MCF 10A (cell line): ENCODE measurements at regions of chr6 and their contacts with region 1.

Region 1: DNA sequence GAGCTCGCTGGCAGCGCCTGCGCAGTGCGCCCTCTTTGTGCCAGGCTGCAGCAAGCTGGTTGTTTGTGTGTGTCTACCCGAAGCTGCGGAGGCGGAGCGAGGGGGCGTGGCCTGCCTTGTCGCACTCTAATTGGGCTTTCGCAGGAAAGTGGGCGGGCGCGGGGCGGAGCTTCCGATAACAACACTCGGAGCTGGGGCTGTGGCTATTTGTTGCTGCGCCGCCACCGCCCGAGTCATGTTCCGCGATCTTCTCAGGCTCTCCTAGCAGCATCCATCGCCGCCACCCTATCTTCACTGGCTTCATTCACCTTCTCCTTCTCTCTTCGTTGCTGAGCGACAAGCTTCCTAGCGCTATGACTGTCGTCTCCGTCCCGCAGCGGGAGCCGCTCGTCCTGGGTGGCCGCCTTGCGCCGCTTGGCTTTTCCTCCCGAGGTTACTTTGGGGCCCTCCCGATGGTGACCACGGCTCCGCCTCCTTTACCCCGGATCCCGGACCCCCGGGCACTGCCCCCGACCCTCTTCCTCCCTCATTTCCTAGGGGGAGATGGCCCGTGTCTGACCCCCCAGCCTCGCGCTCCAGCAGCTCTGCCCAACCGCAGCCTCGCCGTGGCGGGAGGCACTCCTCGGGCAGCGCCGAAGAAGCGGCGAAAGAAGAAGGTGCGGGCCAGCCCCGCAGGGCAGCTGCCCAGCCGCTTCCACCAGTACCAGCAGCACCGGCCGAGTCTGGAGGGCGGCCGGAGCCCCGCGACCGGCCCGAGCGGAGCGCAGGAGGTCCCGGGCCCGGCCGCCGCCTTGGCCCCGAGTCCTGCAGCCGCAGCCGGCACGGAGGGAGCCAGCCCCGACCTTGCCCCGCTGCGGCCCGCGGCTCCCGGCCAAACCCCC is at the start of gene PNRC1:
- DNase-seq: peak; percentile 99
- H3K4me3 Mint-ChIP-seq: peak within 1 kb of the TSS; percentile 96
- H3K27ac Mint-ChIP-seq: peak within 1 kb of the TSS; percentile 92
- H3K4me1 Mint-ChIP-seq: peaks cover 19% of the 10 kb centered on the region
- H3K27me3 Mint-ChIP-seq: no peaks in the 10 kb centered on the region
- CTCF ChIP-seq: no peak
- total RNA-seq, gene PNRC1: 158 and 183 TPM in 2 replicates

Region 2: GRCh38 chr6:88963139-88964090 is 117.4 kb before region 1 on chr6 and contains the start of gene RNGTT:
- CTCF ChIA-PET with region 1: no interaction called
- POLR2A ChIA-PET with region 1: interaction called, 19 read pairs
- intact Hi-C with region 1: no loop called
- DNase-seq: peak; percentile 99
- H3K4me3 Mint-ChIP-seq: peak within 1 kb of the TSS; percentile 93
- H3K27ac Mint-ChIP-seq: peak within 1 kb of the TSS; percentile 92
- H3K4me1 Mint-ChIP-seq: peaks cover 14% of the 10 kb centered on the region
- H3K27me3 Mint-ChIP-seq: no peaks in the 10 kb centered on the region
- CTCF ChIP-seq: no peak
- total RNA-seq, gene RNGTT: 14.6 and 20.6 TPM in 2 replicates

Region 3: GRCh38 chr6:89013438-89013837 is 67.3 kb before region 1 on chr6:
- CTCF ChIA-PET with region 1: no interaction called
- POLR2A ChIA-PET with region 1: interaction called, 11 read pairs
- intact Hi-C with region 1: no loop called
- DNase-seq: no peak
- H3K4me3 Mint-ChIP-seq: no peak overlapping the region
- H3K27ac Mint-ChIP-seq: no peak overlapping the region
- H3K4me1 Mint-ChIP-seq: no peaks in the 10 kb centered on the region
- H3K27me3 Mint-ChIP-seq: no peaks in the 10 kb centered on the region
- CTCF ChIP-seq: no peak

Region 4: DNA sequence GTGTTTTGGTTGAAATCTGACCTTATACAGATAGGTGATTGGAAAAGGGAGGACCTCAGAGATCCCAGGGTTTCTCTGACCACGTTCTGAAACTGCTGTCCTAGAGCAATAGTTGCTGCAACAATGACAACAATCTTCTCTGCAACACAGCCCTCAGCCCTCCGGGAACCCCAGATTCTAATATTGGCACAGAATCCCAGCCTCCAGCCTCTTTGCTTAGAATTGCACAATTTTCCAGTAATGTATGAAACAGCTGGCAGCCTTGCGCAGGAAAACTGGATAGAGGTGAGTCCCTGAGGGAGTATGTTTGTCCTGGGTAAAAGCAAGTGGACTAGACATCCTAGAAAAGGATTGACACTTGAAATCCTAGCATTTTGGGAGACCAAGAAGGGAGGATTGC is 30.6 kb before region 1 on chr6:
- CTCF ChIA-PET with region 1: interaction called, 8 read pairs
- POLR2A ChIA-PET with region 1: interaction called, 177 read pairs
- intact Hi-C with region 1: no loop called
- DNase-seq: peak; percentile 95
- H3K4me3 Mint-ChIP-seq: peak overlapping the region; percentile 45
- H3K27ac Mint-ChIP-seq: peak overlapping the region; percentile 77
- H3K4me1 Mint-ChIP-seq: peaks cover 28% of the 10 kb centered on the region
- H3K27me3 Mint-ChIP-seq: no peaks in the 10 kb centered on the region
- CTCF ChIP-seq: no peak

Region 5: GRCh38 chr6:89117211-89118108 is 36.7 kb after region 1 on chr6 and contains the start of gene SRSF12:
- CTCF ChIA-PET with region 1: interaction called, 6 read pairs
- POLR2A ChIA-PET with region 1: interaction called, 11 read pairs
- intact Hi-C with region 1: no loop called
- DNase-seq: peak; percentile 34
- H3K4me3 Mint-ChIP-seq: peak within 1 kb of the TSS; percentile 79
- H3K27ac Mint-ChIP-seq: no peak within 1 kb of the TSS
- H3K4me1 Mint-ChIP-seq: no peaks in the 10 kb centered on the region
- H3K27me3 Mint-ChIP-seq: no peaks in the 10 kb centered on the region
- CTCF ChIP-seq: no peak
- total RNA-seq, gene SRSF12: 1.1 and 1.2 TPM in 2 replicates